Posterior cingulate gyrus (tissue), 11 donors: ENCODE measurements at regions of chr4 and their contacts with region 1.

Region 1: DNA sequence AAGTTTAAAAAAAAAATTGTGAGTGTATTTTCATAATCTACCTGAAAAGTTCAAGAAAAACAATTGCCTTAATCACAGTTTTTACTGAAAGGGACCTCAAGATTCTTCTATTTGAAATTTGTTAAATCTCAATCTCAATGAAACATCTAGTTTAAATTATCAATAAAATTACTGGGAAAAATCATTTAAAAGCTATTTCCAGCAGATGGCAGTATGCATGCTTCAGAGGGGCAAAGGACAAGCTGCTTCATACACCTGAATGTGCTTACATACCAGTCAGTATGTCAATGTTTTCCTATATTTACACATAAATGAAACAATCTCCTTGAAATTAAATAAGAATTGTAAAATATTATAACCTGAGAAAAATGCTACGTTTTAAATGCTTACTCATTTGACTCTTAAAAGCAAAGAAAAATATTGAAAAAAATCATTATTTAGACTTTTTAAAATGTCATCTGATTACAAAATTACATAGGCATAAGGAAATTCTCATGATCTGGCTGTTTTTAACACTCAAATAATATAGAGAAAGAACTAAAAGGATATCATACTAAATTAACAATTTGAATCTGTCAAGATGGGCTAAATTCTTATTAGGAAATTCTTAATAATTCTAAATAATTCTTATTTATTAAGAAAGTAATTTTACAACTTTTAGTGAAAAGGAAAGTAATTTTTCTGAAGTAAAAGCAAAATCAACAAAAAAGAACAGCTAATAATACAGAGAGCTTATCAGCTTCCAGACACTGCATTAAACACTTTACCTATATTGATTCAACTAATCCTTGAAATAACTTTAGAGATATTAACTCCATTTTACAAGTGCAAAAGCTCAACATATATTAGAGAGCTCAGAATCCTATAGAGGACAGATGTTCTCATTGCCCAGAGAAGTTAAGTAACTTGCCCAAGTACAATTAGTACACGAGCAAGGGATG is 242.1 kb downstream of the ADAMTS3 start:
- DNase-seq: no peak

Region 2: GRCh38 chr4:72468904-72469502 is 142.0 kb after region 1 on chr4:
- intact Hi-C with region 1: loop called (anchors 10 kb)
- DNase-seq: no peak

Region 3: GRCh38 chr4:72997409-72997808 is 670.4 kb after region 1 on chr4:
- intact Hi-C with region 1: no loop called
- DNase-seq: no peak